ENCODE measurements at regions of chr1 and their contacts with region 1.

Region 1: GRCh38 chr1:26744075-26744959 is 43.4 kb upstream of the PIGV start:
- DNase-seq: peak; percentile 87
- H3K4me3 Mint-ChIP-seq: peak overlapping the region; percentile 56
- H3K27ac Mint-ChIP-seq: peak overlapping the region; percentile 92
- H3K4me1 Mint-ChIP-seq: peaks cover 71% of the 10 kb centered on the region
- H3K27me3 Mint-ChIP-seq: no peaks in the 10 kb centered on the region

Region 2: GRCh38 chr1:26541816-26542711 is 202.3 kb before region 1 on chr1:
- intact Hi-C with region 1: loop called (anchors 1 kb)
- DNase-seq: peak; percentile 73
- H3K4me3 Mint-ChIP-seq: peak overlapping the region; percentile 77
- H3K27ac Mint-ChIP-seq: peak overlapping the region; percentile 97
- H3K4me1 Mint-ChIP-seq: peaks cover 67% of the 10 kb centered on the region
- H3K27me3 Mint-ChIP-seq: no peaks in the 10 kb centered on the region

Region 3: GRCh38 chr1:26695356-26696118 is 48.8 kb before region 1 on chr1 and contains the start of gene ARID1A:
- intact Hi-C with region 1: loop called (anchors 1 kb)
- DNase-seq: peak; percentile 97
- H3K4me3 Mint-ChIP-seq: peak within 1 kb of the TSS; percentile 88
- H3K27ac Mint-ChIP-seq: peak within 1 kb of the TSS; percentile 98
- H3K4me1 Mint-ChIP-seq: peaks cover 27% of the 10 kb centered on the region
- H3K27me3 Mint-ChIP-seq: no peaks in the 10 kb centered on the region
- total RNA-seq, gene ARID1A: 109 TPM in 2 replicates

Region 4: DNA sequence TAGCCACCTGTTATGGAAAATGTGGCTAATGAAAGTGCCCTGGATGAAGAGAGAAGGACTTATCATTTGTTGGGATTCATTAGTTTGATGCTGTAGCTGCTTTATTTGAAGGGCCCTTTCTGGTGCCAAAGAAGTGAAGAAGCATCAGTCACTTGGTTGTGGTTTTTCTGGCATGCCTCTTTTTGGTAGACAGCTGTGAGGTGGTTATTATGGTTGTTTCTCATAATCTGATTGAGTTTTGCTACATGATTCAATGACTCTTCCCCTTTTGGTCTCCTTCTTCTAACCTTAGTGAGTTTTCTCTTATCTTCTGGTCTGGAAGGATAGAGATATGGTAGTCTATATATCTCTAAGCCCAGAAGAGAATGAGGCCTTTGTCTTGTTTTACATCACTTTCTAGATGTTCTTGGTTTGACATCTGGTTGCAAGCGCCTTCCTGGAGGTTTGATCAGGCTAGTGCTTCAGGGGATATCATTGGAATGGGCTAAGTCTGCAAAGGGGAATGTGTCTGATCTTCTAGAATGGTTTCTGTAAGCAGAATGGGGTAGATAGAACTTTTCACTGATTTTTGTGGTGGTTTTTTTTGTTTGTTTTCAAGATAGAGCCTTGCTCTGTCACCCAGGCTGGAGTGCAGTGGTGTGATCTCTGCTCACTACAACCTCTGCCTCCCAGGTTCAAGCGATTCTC is 22.5 kb before region 1 on chr1:
- intact Hi-C with region 1: loop called (anchors 1 kb)
- DNase-seq: no peak
- H3K4me3 Mint-ChIP-seq: peak overlapping the region; percentile 47
- H3K27ac Mint-ChIP-seq: peak overlapping the region; percentile 70
- H3K4me1 Mint-ChIP-seq: peaks cover 73% of the 10 kb centered on the region
- H3K27me3 Mint-ChIP-seq: no peaks in the 10 kb centered on the region

Region 5: GRCh38 chr1:26733982-26734381 is 10.3 kb before region 1 on chr1:
- intact Hi-C with region 1: loop called (anchors 1 kb)
- DNase-seq: no peak
- H3K4me3 Mint-ChIP-seq: no peak overlapping the region
- H3K27ac Mint-ChIP-seq: peak overlapping the region; percentile 63
- H3K4me1 Mint-ChIP-seq: peaks cover 43% of the 10 kb centered on the region
- H3K27me3 Mint-ChIP-seq: no peaks in the 10 kb centered on the region